Endothelial cell of umbilical vein (primary cell): ENCODE measurements at regions of chr5 and their contacts with region 1.

Region 1: DNA sequence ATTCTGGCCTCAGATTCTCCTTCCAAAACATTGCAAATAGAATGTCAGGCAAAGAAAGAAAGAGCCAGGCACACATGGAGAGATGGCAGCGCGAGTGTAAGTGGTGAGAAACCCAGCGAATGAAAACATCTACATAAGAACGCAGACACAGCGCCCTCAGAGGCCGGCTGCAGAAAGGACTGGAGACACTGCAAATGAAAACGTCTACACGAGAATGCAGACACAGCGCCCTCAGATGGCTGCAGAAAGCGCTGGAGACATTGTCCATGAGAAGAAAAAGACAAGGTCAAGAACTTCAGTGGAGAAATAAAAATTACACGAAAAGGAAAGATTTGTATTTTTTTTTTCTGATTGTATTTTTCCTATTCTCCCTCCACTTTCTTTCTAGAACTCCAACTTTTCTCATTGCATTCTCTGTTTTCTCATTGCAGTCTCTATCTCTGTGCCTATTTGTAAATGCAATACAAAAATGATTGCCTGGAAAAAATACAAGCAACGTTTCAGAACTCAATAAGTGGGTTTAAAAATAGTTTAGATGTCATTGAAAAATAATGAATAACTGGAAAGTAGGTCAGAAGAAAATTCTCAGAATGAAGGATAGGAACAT is 117.9 kb upstream of the LPCAT1 start:
- DNase-seq: peak; percentile 79
- H3K4me3 ChIP-seq: no peak overlapping the region
- H3K27ac ChIP-seq: no peak overlapping the region
- H3K4me1 ChIP-seq: no peaks in the 10 kb centered on the region
- H3K27me3 ChIP-seq: peaks cover 11 to 12% of the 10 kb centered on the region in 2 experiments
- CTCF ChIP-seq: peak; percentile 81 to 97
- POLR2A ChIP-seq: no peak

Region 2: GRCh38 chr5:923281-923873 is 718.3 kb before region 1 on chr5:
- CTCF ChIA-PET with region 1: interaction called, 4 read pairs
- POLR2A ChIA-PET with region 1: no interaction called
- dilution Hi-C with region 1: no loop called
- intact Hi-C with region 1: loop called (anchors 5 kb)
- DNase-seq: peak; percentile 60
- H3K4me3 ChIP-seq: no peak overlapping the region
- H3K27ac ChIP-seq: no peak overlapping the region
- H3K4me1 ChIP-seq: peaks cover 4% of the 10 kb centered on the region
- H3K27me3 ChIP-seq: peaks cover 2 to 10% of the 10 kb centered on the region in 2 experiments
- CTCF ChIP-seq: peak; percentile 95 to 98
- POLR2A ChIP-seq: no peak

Region 3: DNA sequence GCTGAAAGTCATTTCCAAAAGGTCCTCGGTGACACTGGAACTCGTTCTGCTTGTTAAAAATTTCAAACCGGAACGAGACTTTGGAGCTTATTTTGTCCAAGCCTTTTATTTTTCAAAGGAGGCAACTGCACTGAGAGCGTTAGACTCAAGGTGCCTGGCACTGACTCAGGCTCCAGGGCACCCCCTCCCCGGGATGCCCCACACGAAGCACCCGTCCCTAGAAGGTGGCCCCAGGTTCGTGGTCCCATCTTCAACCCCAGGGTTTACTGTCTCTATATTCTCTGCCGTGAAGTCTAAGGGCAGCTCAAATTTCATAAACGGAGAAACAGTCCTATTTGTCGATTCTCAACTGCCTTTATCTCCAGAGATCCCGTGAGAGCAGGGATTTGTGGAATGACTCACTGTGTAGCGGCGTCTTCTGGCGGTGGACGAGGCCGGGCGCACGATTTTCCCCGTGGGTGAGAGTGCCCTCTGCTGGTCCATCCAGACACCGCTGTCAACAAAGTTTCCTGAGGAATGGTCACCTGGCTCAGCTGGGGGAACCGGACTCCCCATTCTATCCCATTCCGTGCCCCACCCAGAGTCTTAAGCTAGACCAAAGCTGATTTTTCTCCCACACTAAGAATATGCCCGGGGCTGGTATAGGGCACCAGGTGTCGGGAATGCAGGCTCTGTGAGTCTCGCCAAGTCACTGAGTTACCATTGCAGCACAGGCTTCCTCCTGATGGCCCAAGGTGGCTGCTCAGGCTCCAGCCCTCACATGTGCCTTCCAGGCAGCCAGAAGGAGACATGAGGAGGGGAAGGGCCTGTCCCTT is 467.3 kb before region 1 on chr5:
- CTCF ChIA-PET with region 1: interaction called, 33 read pairs
- POLR2A ChIA-PET with region 1: no interaction called
- dilution Hi-C with region 1: no loop called
- intact Hi-C with region 1: no loop called
- DNase-seq: peak; percentile 63
- H3K4me3 ChIP-seq: no peak overlapping the region
- H3K27ac ChIP-seq: no peak overlapping the region
- H3K4me1 ChIP-seq: no peaks in the 10 kb centered on the region
- H3K27me3 ChIP-seq: no peaks in the 10 kb centered on the region
- CTCF ChIP-seq: peak; percentile 80 to 84
- POLR2A ChIP-seq: no peak

Region 4: DNA sequence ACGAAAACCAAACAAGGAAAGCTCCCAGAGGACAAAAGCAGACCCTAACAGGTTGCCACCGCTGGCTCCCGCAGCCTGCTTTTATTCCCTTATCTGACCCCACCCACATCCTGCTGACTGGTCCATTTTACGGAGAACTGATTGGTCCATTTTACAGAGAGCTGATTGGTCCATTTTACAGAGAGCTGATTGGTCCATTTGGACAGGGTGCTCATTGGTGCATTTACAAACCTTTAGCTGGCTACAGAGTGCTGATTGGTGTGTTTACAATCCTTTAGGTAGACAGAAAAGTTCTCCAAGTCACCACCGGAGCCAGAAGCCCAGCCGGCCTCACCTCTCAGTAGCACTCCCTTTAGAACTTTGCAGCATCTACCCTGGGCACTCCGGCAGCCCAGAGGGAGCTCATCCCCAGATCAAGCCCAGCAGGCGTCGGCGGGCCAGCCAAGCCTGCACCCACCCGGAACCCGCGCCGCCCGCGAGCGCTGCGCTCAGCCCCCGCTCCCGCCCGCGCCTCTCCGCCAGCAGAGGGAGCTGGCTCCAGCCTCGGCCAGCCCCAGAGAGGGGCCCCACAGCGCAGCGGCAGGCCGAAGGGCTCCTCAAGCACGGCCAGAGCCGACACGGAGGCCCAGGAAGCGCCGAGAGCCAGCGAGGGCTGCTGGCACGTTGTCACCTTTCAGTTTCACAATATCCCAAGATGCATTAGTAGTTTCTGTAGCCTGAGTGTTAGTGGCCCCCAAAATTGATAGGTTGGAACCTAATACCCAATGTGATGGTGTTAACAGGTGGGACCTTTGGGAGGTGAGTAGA is 261.4 kb before region 1 on chr5:
- CTCF ChIA-PET with region 1: interaction called, 10 read pairs
- POLR2A ChIA-PET with region 1: no interaction called
- dilution Hi-C with region 1: no loop called
- intact Hi-C with region 1: loop called (anchors 1 kb)
- DNase-seq: peak; percentile 6
- H3K4me3 ChIP-seq: no peak overlapping the region
- H3K27ac ChIP-seq: no peak overlapping the region
- H3K4me1 ChIP-seq: no peaks in the 10 kb centered on the region
- H3K27me3 ChIP-seq: no peaks in the 10 kb centered on the region
- CTCF ChIP-seq: peak; percentile 53 to 55
- POLR2A ChIP-seq: no peak

Region 5: DNA sequence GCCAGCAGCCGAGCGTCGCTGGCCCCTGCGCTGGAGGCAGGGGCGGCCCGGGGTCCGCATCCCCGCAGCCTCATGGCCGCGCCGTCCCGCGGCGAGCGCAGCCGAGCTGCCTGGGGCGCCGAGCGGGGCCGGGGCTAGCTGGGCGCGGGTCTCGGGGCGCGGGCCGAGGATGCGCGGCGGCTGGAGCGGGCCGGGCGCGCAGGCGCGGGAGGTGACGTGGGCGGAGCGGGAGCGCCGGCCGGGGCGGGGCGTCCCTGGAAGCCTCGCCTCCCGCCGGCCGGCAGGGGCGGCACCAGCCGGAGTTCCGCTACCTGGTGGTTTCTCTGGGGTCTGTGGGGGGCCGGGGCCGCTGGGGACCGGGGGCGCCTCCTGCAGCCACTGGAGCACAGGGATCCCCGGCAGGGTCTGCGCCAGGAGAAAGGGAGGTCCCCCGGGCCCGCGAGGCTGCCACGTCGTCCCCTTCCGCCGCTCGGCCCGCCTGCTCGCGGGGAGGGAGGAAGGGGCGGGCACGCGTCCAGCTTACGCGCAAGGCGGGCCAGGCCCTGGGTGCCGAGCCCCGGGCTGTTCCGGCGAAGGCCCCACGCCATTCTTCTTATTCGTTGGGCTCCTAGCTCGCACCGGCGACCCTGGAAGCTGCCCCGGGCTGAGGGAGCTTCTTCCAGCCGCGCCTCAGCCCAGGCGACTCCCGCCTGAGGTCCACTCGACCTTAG is 117.7 kb before region 1 on chr5 and contains the start of gene LPCAT1:
- CTCF ChIA-PET with region 1: no interaction called
- POLR2A ChIA-PET with region 1: no interaction called
- dilution Hi-C with region 1: no loop called
- intact Hi-C with region 1: loop called (anchors 1 kb)
- DNase-seq: peak; percentile 70
- H3K4me3 ChIP-seq: peak within 1 kb of the TSS; percentile 72 to 92 (median 76)
- H3K27ac ChIP-seq: peak within 1 kb of the TSS; percentile 59
- H3K4me1 ChIP-seq: peaks cover 16% of the 10 kb centered on the region
- H3K27me3 ChIP-seq: no peaks in the 10 kb centered on the region
- CTCF ChIP-seq: no peak
- POLR2A ChIP-seq: no peak
- total RNA-seq, gene LPCAT1: 49.2 and 57.2 TPM in 2 replicates

Region 6: GRCh38 chr5:1652596-1653345 is 11.1 kb after region 1 on chr5:
- CTCF ChIA-PET with region 1: interaction called, 14 read pairs
- POLR2A ChIA-PET with region 1: no interaction called
- dilution Hi-C with region 1: no loop called
- intact Hi-C with region 1: no loop called
- DNase-seq: no peak
- H3K4me3 ChIP-seq: no peak overlapping the region
- H3K27ac ChIP-seq: no peak overlapping the region
- H3K4me1 ChIP-seq: no peaks in the 10 kb centered on the region
- H3K27me3 ChIP-seq: peaks cover 4 to 12% of the 10 kb centered on the region in 2 experiments
- CTCF ChIP-seq: no peak
- POLR2A ChIP-seq: no peak

Region 7: DNA sequence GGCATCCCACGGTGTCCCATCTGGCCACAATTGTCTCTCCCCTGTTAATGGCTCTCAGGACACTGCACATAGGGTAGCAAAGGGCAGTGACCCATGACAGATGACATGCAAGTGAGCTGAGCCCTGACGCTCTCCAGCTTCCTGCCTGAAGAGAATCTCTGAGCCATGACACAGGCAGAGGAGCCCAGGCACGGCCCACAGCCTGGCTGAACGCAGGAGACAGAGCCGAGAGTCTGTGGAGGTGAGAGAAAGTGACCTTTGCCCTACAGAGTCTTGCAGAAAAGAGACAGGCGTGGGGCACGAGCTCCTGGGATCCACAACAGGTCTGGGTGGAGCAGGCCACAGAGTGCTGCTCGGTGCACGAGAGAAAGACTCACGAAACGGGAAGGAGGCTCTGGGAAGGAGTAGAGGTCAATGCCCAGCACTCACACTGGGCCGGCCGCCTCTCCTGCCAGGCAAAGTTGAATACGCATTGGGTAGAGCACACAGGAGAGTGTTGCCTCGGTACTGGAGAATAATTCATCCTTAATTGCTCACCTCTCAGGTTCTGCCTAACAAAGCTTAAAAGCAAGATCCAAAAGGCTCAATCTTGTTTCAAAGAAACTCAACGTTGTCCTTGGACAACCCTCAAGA is 67.6 kb after region 1 on chr5:
- CTCF ChIA-PET with region 1: no interaction called
- POLR2A ChIA-PET with region 1: no interaction called
- dilution Hi-C with region 1: no loop called
- intact Hi-C with region 1: no loop called
- DNase-seq: no peak
- H3K4me3 ChIP-seq: no peak overlapping the region
- H3K27ac ChIP-seq: no peak overlapping the region
- H3K4me1 ChIP-seq: no peaks in the 10 kb centered on the region
- H3K27me3 ChIP-seq: peaks cover 0 to 3% of the 10 kb centered on the region in 2 experiments
- CTCF ChIP-seq: no peak
- POLR2A ChIP-seq: no peak

Region 8: GRCh38 chr5:1831677-1832313 is 190.1 kb after region 1 on chr5:
- CTCF ChIA-PET with region 1: no interaction called
- POLR2A ChIA-PET with region 1: no interaction called
- dilution Hi-C with region 1: no loop called
- intact Hi-C with region 1: no loop called
- DNase-seq: no peak
- H3K4me3 ChIP-seq: no peak overlapping the region
- H3K27ac ChIP-seq: no peak overlapping the region
- H3K4me1 ChIP-seq: no peaks in the 10 kb centered on the region
- H3K27me3 ChIP-seq: no peaks in the 10 kb centered on the region
- CTCF ChIP-seq: no peak
- POLR2A ChIP-seq: no peak

Region 9: DNA sequence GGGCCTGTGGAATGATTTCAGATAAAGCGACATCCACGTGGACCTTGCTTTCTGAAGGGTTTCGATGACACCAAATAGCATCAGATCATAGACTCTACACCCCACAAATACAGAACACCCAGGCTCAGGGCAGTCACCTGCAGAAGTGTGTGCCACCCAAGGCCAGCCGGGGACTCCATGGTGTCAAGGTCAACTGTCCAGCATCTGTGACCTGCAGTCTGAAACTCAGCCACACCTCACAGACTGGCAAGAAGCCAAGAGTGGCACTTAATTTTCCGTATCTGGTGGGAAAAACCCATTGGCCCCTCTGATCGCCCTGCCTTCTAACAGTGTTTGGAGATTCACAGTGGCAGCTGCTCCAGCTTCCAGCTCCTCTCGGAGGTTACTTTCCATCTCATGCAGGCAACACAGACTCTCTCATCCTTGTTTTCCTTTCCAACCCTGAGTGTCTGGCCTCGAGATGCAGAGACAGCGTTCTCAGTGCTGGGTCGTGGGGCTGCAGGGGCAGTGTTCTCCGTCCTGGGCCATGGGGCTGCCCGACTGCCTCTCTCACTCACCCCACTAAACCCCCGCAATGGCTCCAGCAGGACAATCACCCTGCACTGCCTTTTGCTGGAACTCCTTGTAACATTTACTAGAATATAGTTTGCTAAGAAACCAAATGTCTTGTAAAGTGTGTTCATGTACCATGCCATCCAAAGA is 887.9 kb after region 1 on chr5:
- CTCF ChIA-PET with region 1: no interaction called
- POLR2A ChIA-PET with region 1: no interaction called
- dilution Hi-C with region 1: no loop called
- intact Hi-C with region 1: no loop called
- DNase-seq: no peak
- H3K4me3 ChIP-seq: no peak overlapping the region
- H3K27ac ChIP-seq: no peak overlapping the region
- H3K4me1 ChIP-seq: no peaks in the 10 kb centered on the region
- H3K27me3 ChIP-seq: no peaks in the 10 kb centered on the region
- CTCF ChIP-seq: no peak
- POLR2A ChIP-seq: no peak